ENCODE measurements at regions of chr10 and their contacts with region 1.

Region 1: GRCh38 chr10:71974489-71975021 is 10.4 kb downstream of the CHST3 start:
- DNase-seq: peak; percentile 80 to 84
- ATAC-seq: peak; percentile 65 to 69
- H3K4me3 ChIP-seq: no peak overlapping the region
- H3K27ac ChIP-seq: peak overlapping the region; percentile 87 to 98
- H3K4me1 ChIP-seq: peaks cover 100% of the 10 kb centered on the region
- CTCF ChIP-seq: no peak
- EP300 ChIP-seq: peak in 1 of 2 experiments; percentile 39; a peak in 1 of 5 replicates
- POLR2A ChIP-seq: no peak
- RAD21 ChIP-seq: no peak

Region 2: DNA sequence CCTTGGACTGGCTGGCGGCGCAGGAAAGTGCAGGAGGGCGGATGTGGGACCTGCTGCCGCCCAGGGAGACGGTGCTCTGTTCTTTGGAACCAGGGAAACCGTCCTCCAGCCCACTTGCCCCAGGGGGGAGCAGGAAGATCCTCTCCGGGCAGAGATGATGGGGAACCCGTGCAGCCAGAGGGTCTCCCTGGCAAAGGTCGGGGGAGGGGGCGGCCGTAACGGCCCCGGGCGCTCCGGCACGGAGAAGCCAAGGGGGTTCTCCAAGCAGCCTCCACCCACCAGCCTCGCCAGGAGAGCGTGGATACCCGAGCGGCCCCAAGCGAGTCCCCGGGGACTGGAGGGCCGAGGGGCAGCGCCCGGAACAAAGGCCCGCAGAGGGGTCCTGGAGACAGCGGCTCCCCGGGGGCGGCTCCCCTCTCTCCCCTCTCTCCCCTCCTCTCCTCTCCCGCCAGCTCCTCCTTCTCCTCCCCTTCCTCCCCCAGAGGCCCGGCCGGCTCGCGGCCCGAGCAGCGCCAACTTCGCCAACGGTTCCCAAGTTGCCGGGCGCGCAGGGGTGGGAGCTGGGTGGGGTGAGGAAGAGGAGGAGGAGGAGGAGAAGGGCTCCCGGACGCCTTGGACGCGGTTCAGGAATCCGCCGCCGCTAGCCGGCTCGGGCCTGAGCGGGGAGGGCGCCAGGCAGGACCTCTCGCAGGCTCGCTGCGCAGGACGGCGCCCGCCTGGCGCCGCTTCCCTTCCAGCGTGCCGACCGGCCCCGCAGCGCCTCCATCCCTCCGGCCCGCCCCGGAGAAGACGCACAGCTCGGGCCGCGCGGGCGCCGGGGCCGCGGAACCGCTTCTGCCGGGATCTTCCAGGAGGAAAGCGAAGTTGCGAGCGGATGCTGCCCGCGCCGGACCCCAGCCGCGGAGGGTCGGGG is 10.5 kb before region 1 on chr10 and contains the start of gene CHST3:
- CTCF ChIA-PET with region 1: interaction called, 6 read pairs
- POLR2A ChIA-PET with region 1: interaction called, 16 read pairs
- DNase-seq: peak in 1 of 2 experiments; percentile 32
- ATAC-seq: peak; percentile 70 to 75
- H3K4me3 ChIP-seq: peak within 1 kb of the TSS; percentile 77
- H3K27ac ChIP-seq: peak within 1 kb of the TSS; percentile 92 to 98
- H3K4me1 ChIP-seq: peaks cover 40% of the 10 kb centered on the region
- CTCF ChIP-seq: peak; percentile 11; the same call in 1 of the 3 replicates
- EP300 ChIP-seq: no peak
- POLR2A ChIP-seq: peak; percentile 36
- RAD21 ChIP-seq: no peak
- polyA plus RNA-seq, gene CHST3: 12.8 and 13.8 TPM in 2 replicates

Region 3: GRCh38 chr10:71985542-71986250 is 11.1 kb after region 1 on chr10:
- CTCF ChIA-PET with region 1: interaction called, 48 read pairs
- POLR2A ChIA-PET with region 1: no interaction called
- DNase-seq: no peak
- ATAC-seq: peak; percentile 19 to 47; a peak in 3 of 6 replicates
- H3K4me3 ChIP-seq: no peak overlapping the region
- H3K27ac ChIP-seq: peak overlapping the region in 1 of 2 experiments; percentile 47; a peak in 2 of 6 replicates
- H3K4me1 ChIP-seq: peaks cover 24% of the 10 kb centered on the region
- CTCF ChIP-seq: no peak
- EP300 ChIP-seq: no peak
- POLR2A ChIP-seq: no peak
- RAD21 ChIP-seq: no peak

Region 4: GRCh38 chr10:72133517-72133916 is 159.0 kb after region 1 on chr10:
- CTCF ChIA-PET with region 1: no interaction called
- POLR2A ChIA-PET with region 1: no interaction called
- DNase-seq: no peak
- ATAC-seq: peak in 1 of 2 experiments; percentile 44; a peak in 3 of 6 replicates
- H3K4me3 ChIP-seq: no peak overlapping the region
- H3K27ac ChIP-seq: peak overlapping the region; percentile 10 to 56; a peak in 3 of 6 replicates
- H3K4me1 ChIP-seq: peaks cover 23% of the 10 kb centered on the region
- CTCF ChIP-seq: no peak
- EP300 ChIP-seq: no peak
- POLR2A ChIP-seq: no peak
- RAD21 ChIP-seq: no peak

Measured in A549 (cell line).